ENCODE measurements at regions of chr16 and their contacts with region 1.

Region 1: DNA sequence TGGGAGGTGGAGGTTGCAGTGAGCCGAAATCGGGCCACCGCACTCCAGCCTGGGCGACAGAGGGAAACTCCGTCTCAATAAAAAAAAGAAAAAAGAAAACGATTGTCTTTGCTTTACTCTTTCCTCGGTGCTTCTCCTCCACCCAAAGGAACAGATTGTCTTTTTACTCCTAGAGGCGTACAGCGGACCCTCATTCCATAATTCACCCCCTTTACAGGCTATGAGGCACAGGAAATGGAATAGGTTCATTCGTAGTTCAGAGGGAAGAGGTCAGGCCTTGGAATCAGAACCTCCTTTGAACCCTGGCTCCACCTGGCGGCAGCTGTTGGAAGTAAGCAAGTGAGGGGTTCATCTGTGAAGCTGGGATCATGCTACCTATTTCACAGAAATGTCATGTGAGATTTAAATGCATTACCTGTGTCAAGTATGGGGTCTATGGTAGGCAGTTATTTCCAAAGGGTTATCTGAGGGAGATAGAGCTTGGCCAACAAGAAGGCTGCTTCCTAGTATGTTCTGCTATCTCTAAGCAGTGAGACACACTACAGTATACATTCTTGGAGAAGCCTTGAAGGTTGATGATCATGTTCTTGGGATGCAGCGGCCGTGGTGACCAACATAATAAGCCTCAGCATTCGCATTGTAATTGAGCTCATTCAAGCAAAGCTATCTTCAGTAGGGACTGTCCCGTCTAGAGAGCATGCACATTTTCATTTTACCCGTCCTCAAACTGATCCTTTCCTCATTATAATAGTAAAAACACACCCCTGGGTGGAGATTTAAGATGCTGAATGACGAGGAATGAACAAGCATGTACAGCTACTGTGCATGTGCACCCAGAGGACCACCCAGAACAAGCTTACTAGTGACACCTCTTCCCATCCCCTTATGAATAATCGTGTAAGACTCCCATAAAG is 18.7 kb upstream of the ZNF689 start:
- DNase-seq: peak; percentile 88 to 89
- ATAC-seq: peak; percentile 74 to 93 (median 87)
- H3K4me3 ChIP-seq: peak overlapping the region in 8 of 10 donors; percentile 13 to 44 (median 22)
- H3K27ac ChIP-seq: peak overlapping the region in 7 of 10 donors; percentile 18 to 74 (median 59)
- H3K4me1 ChIP-seq: peaks cover 0 to 13% (median 0%) of the 10 kb centered on the region in 9 donors
- H3K27me3 ChIP-seq: no peaks in the 10 kb centered on the region
- CTCF ChIP-seq: peak; percentile 82 to 93 (median 90)

Region 2: DNA sequence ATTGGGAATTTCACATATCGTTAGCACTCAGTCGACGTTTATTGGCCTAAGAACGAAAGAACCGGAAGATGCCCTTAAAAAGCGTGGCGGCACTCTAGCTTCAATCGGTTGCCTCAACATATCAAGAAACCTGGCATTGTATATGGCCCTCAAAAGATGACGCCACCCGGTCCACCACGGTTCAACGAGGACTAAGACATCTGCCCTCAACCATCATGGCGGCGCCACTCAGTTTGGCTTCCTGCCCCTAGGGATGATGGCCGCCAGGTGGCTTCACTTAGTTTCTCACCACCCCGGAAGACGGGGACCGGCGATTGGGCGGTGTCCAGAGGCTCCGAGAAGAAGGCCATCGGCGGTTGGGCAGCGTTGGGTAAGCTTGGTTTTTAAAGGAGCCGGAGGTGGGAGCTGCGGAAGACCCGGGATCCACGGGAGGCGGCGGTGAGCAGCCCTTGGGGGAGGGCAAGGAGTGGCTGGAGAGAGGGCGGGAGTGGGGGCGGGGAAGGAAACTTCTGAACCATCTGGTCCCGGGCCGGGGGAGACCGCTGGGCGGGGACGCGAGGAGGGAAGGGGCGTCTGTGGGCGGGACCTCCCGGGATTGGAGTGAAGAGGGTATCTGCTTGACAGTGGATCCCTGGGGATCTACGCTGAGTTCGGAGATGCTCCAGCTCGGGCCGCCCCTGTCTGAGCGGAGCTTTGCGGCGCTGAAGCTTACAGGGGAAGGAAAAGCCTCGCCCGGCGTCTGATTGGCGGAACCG is 21.7 kb after region 1 on chr16 and contains the start of gene PRR14:
- intact Hi-C with region 1: loop called in 1 of 10 experiments (anchors 1 kb)
- DNase-seq: peak; percentile 99 to 100
- ATAC-seq: peak; percentile 91 to 96 (median 94)
- H3K4me3 ChIP-seq: peak within 1 kb of the TSS; percentile 73 to 97 (median 88)
- H3K27ac ChIP-seq: peak within 1 kb of the TSS; percentile 89 to 98 (median 96)
- H3K4me1 ChIP-seq: peaks cover 3 to 23% (median 19%) of the 10 kb centered on the region in 9 donors
- H3K27me3 ChIP-seq: no peaks in the 10 kb centered on the region
- CTCF ChIP-seq: peak in 7 of 9 donors; percentile 8 to 51 (median 42)
- total RNA-seq, gene PRR14: 9.9 to 23.9 (median 16.7) TPM

Region 3: GRCh38 chr16:30669896-30670797 is 41.3 kb after region 1 on chr16:
- intact Hi-C with region 1: no loop called
- DNase-seq: no peak
- ATAC-seq: peak in 2 of 8 donors; percentile 16 to 22
- H3K4me3 ChIP-seq: no peak overlapping the region
- H3K27ac ChIP-seq: no peak overlapping the region
- H3K4me1 ChIP-seq: no peaks in the 10 kb centered on the region
- H3K27me3 ChIP-seq: no peaks in the 10 kb centered on the region
- CTCF ChIP-seq: no peak